ENCODE measurements at regions of chr2 and their contacts with region 1.

Region 1: GRCh38 chr2:33673937-33674336 is 74.8 kb upstream of the FAM98A start:
- DNase-seq: no peak
- ATAC-seq: no peak
- H3K4me3 ChIP-seq: no peak overlapping the region
- H3K27ac ChIP-seq: no peak overlapping the region
- H3K4me1 ChIP-seq: no peaks in the 10 kb centered on the region
- H3K27me3 ChIP-seq: 0 out of 2 replicates have a peak, but pooled peaks cover 2% of the 10 kb centered on the region
- CTCF ChIP-seq: peak; percentile 59

Region 2: DNA sequence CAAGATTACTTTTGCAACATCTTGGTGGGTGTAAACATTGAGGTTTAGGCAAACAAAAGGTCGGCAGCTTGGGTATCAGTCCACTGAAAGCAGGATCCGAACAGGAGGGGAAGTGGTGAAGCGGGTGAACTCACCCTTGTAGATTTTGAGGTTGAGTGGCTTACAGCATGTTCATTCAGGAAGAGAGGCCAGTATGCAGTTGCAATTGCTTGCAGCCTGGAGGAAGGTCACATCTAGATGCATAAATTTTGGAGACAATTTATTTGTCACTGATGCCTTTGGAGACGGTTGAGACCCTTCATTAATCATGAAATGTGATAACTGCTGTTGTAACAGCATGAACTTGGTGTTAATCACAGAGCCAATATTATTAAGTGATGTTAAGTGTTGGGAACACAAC is 596.1 kb before region 1 on chr2:
- CTCF ChIA-PET with region 1: no interaction called
- POLR2A ChIA-PET with region 1: no interaction called
- in situ Hi-C with region 1: no loop called
- intact Hi-C with region 1: no loop called
- DNase-seq: no peak
- ATAC-seq: no peak
- H3K4me3 ChIP-seq: no peak overlapping the region
- H3K27ac ChIP-seq: no peak overlapping the region
- H3K4me1 ChIP-seq: no peaks in the 10 kb centered on the region
- H3K27me3 ChIP-seq: no peaks in the 10 kb centered on the region
- CTCF ChIP-seq: no peak

Region 3: DNA sequence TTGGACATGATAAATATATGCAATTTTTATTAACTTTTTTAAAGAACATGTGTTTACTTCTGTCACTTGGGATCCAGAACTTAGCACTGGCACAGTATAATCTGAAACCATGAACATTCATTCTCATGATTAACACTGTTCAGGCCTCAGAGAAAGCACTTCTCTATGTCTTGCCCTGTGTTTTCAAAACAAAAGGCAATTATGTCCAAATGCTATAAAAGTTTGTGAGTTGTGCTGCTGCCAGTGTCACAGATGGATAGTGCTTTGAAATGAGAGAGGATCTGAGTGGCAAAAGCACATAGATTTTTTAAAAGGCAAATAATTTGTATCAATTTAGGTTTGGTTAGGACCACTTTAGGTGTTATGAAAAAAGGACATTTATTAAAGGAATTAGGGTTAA is 395.7 kb after region 1 on chr2:
- CTCF ChIA-PET with region 1: no interaction called
- POLR2A ChIA-PET with region 1: no interaction called
- in situ Hi-C with region 1: no loop called
- intact Hi-C with region 1: loop called (anchors 10 kb)
- DNase-seq: no peak
- ATAC-seq: no peak
- H3K4me3 ChIP-seq: no peak overlapping the region
- H3K27ac ChIP-seq: no peak overlapping the region
- H3K4me1 ChIP-seq: no peaks in the 10 kb centered on the region
- H3K27me3 ChIP-seq: no peaks in the 10 kb centered on the region
- CTCF ChIP-seq: no peak

Measured in Panc1 (cell line).